ENCODE measurements at regions of chr19 and their contacts with region 1.

Region 1: GRCh38 chr19:17539238-17540117 is 16.0 kb upstream of the COLGALT1 start:
- DNase-seq: peak; percentile 97
- ATAC-seq: peak; percentile 93 to 95

Region 2: GRCh38 chr19:17579661-17580244 is 40.3 kb after region 1 on chr19:
- intact Hi-C with region 1: loop called in 1 of 2 experiments (anchors 1 kb)
- DNase-seq: peak; percentile 68
- ATAC-seq: peak; percentile 71 to 80

Region 3: GRCh38 chr19:17671906-17672305 is 132.4 kb after region 1 on chr19:
- intact Hi-C with region 1: no loop called
- DNase-seq: no peak
- ATAC-seq: no peak

Region 4: GRCh38 chr19:17766543-17767131 is 227.2 kb after region 1 on chr19:
- intact Hi-C with region 1: loop called in 1 of 2 experiments (anchors 5 kb)
- DNase-seq: peak; percentile 87
- ATAC-seq: peak; percentile 88

Measured in left cardiac atrium (tissue), 4 donors.